ENCODE measurements at regions of chr7 and their contacts with region 1.

Region 1: DNA sequence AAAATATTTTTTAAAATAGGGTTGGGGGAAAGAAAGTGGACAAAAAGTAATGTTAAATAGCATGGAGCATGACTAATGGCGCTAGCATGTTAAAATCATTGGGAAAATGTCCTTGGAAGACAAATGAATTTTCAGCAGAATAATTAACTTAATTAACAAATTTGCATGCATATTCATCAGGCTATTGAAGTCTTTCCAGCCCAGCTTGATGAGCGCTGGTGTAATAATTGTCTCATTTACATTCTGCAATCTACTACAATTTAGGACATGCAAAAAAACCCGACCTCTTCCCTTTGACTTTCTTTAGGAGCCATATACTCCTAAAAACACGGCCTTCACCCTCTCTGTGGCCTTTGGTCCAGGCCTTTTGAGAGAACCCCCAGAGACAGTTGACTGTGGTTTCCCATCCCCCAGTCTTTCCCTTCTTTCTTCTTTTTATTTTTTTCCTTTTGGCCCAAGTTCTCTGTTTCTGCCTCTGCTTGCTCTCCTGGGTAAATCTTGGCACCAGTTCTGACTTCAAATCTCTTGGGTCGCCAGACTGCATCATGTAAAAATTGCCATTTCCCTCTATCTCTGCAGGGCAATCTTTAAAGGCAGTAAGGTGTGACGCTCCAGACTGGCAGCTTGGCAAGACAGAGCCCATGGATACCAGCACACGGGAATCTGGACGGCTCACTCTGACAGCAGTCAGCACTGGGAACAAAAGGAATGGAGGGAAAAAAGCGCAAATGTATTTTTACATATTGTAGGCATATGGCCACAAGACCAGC is 105.5 kb downstream of the NEUROD6 start:
- DNase-seq: no peak
- H3K4me3 ChIP-seq: no peak overlapping the region
- CTCF ChIP-seq: no peak

Region 2: DNA sequence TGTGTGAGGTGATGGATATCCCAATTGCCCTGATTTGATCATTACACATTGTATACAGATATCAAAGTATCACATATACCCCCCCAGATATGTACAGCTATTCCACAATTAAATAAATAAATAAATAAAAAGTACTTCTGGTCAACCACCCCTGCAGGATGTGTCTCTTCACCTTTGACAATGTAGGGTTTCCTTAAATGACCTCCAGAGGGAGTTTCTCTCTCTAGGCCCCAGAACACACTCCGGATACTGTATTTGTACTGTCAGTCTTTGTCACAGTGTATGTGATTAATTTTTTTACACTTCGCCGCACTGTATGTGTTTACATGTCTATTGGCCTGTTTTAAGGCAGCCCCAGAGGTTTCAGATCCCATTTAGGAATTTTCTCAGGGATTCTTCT is 59.3 kb before region 1 on chr7:
- in situ Hi-C with region 1: no loop called
- DNase-seq: no peak
- H3K4me3 ChIP-seq: no peak overlapping the region
- CTCF ChIP-seq: no peak

Region 3: GRCh38 chr7:31299336-31299735 is 64.3 kb after region 1 on chr7:
- in situ Hi-C with region 1: loop called (anchors 5 kb)
- DNase-seq: no peak
- H3K4me3 ChIP-seq: no peak overlapping the region
- CTCF ChIP-seq: no peak